ENCODE measurements at regions of chr1 and their contacts with region 1.

Region 1: GRCh38 chr1:116485071-116485735 is 85.6 kb downstream of the CD58 start:
- DNase-seq: peak; percentile 83
- H3K4me3 ChIP-seq: no peak overlapping the region
- H3K27ac ChIP-seq: no peak overlapping the region
- H3K4me1 ChIP-seq: peaks cover 0 to 10% (median 0%) of the 10 kb centered on the region in 4 donors
- H3K27me3 ChIP-seq: peaks cover 0 to 2% of the 10 kb centered on the region in 2 donors
- CTCF ChIP-seq: peak; percentile 89 to 92

Region 2: GRCh38 chr1:116151739-116152576 is 333.2 kb before region 1 on chr1:
- intact Hi-C with region 1: loop called (anchors 5 kb)
- DNase-seq: peak; percentile 63 to 86
- H3K4me3 ChIP-seq: peak overlapping the region; percentile 46 to 54
- H3K27ac ChIP-seq: peak overlapping the region; percentile 54 to 69
- H3K4me1 ChIP-seq: peaks cover 0 to 7% (median 6%) of the 10 kb centered on the region in 4 donors
- H3K27me3 ChIP-seq: no peaks in the 10 kb centered on the region
- CTCF ChIP-seq: peak; percentile 92 to 95

Region 3: GRCh38 chr1:116360429-116361173 is 124.6 kb before region 1 on chr1:
- intact Hi-C with region 1: loop called (anchors 5 kb)
- DNase-seq: no peak
- H3K4me3 ChIP-seq: no peak overlapping the region
- H3K27ac ChIP-seq: no peak overlapping the region
- H3K4me1 ChIP-seq: no peaks in the 10 kb centered on the region
- H3K27me3 ChIP-seq: no peaks in the 10 kb centered on the region
- CTCF ChIP-seq: peak; percentile 36 to 54

Region 4: GRCh38 chr1:117077267-117077666 is 592.1 kb after region 1 on chr1:
- intact Hi-C with region 1: no loop called
- DNase-seq: no peak
- H3K4me3 ChIP-seq: no peak overlapping the region
- H3K27ac ChIP-seq: no peak overlapping the region
- H3K4me1 ChIP-seq: no peaks in the 10 kb centered on the region
- H3K27me3 ChIP-seq: no peaks in the 10 kb centered on the region
- CTCF ChIP-seq: no peak

Region 5: GRCh38 chr1:117392771-117393170 is 907.6 kb after region 1 on chr1:
- intact Hi-C with region 1: no loop called
- DNase-seq: no peak
- H3K4me3 ChIP-seq: no peak overlapping the region
- H3K27ac ChIP-seq: no peak overlapping the region
- H3K4me1 ChIP-seq: peaks cover 0 to 23% (median 5%) of the 10 kb centered on the region in 4 donors
- H3K27me3 ChIP-seq: no peaks in the 10 kb centered on the region
- CTCF ChIP-seq: no peak